ENCODE measurements at regions of chr7 and their contacts with region 1.

Region 1: GRCh38 chr7:149005241-149006050 is 22.9 kb downstream of the PDIA4 start:
- DNase-seq: peak; percentile 93
- ATAC-seq: peak; percentile 90

Region 2: DNA sequence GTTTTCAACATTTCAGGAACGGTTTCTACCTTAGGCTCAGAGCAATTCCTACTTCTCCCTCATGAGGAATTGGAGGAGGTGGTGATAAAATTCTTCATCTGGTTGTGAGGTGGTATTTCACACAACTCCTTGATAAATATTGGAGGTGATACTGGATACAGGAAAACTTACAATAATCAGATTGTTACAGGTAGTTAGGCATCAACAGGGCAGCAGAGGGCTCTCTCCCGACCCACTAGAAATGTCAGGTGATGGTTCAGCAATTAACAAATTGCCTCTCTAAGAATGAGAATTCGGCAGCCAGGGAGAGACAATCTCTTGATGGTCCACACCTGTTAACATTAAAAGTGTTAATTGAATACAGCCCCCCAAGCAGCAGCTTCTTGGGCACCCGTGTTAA is 62.4 kb after region 1 on chr7:
- intact Hi-C with region 1: loop called (anchors 5 kb)
- DNase-seq: no peak
- ATAC-seq: no peak

Region 3: GRCh38 chr7:149090397-149091195 is 85.2 kb after region 1 on chr7 and contains the start of gene ZNF786:
- intact Hi-C with region 1: loop called (anchors 10 kb)
- DNase-seq: peak; percentile 93
- ATAC-seq: peak; percentile 97
- total RNA-seq, gene ZNF786: 7.7 TPM

Region 4: DNA sequence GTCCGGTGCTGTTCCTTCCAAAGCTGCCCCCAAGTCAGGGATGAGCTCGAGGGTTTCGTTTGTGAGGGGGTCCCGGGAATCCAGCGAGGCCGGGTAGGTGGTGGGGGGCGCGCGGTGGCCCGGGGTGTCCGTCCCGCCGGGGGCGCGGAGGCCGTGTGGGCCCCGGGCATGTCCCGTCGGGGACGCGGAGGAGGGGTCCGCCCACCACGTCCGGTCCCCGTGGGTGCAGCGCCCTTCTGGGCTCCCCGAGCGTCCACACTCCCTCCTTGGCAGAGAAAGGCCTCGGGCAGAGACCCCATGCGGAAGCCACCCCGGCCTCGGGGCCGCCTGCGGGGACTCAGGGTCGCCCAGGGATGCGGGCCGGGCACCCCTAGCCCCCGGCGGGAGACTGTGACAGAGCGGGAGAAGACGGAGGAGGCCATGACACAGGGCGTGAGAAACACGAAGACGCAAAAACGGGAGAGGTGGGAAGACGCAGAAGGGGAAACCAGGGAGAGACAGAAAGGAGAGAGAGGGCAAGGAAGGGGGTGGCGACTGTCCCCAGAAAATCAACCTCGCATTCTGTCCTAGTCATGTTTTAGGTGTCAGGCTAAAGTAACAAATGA is 121.3 kb after region 1 on chr7:
- intact Hi-C with region 1: no loop called
- DNase-seq: peak; percentile 72
- ATAC-seq: peak; percentile 51

Measured in sciatic nerve (tissue), 2 donors.